ENCODE measurements at regions of chr9 and their contacts with region 1.

Region 1: GRCh38 chr9:107644733-107645463 is 155.3 kb upstream of the KLF4 start:
- DNase-seq: peak; percentile 78 to 95
- H3K4me3 ChIP-seq: no peak overlapping the region
- CTCF ChIP-seq: no peak
- POLR2A ChIP-seq: no peak

Region 2: DNA sequence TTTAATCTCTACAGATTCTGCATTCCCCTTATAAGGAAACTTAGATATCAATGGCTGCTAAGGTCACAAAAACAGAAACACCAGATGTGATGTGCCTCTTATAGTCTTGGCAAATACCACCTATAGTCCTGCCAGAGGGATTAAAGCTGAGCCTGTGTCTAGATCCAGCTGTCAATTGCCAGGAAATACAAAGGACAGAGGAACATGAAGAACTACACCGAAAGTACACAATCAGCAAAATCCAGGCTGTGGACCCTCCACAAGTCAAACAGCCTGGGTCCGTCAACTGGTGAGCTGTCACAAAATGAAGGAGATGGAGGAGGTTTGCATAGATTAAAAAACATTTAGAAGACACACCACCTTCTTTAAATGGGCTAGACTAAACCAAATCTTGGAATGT is 240.7 kb before region 1 on chr9:
- intact Hi-C with region 1: loop called (anchors 10 kb)
- DNase-seq: no peak
- H3K4me3 ChIP-seq: no peak overlapping the region
- CTCF ChIP-seq: no peak
- POLR2A ChIP-seq: no peak